ENCODE measurements at regions of chr11 and their contacts with region 1.

Region 1: DNA sequence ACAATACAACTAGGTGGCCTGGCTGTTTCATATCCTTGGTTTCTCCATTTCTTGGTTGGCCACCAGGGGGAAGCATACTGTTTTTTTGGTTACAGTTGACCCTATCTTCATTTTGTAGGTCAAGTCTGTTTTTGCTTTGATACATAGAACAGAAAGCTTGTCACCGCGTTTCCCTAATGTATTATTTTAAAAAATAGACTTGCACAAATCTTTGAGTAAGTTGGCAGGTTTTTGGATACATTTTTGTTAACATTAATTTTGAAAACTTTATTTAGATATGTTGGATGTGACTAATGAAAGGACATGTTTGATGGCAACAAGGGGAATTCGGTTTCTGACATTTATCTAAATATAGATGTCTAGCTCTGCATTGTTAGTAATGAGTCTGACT is 3.0 kb downstream of the NCR3LG1 start:
- DNase-seq: peak in 1 of 2 experiments; percentile 80
- H3K4me3 ChIP-seq: no peak overlapping the region
- H3K27ac ChIP-seq: no peak overlapping the region
- H3K4me1 ChIP-seq: peaks cover 0 to 8% (median 4%) of the 10 kb centered on the region in 4 experiments; a peak in 5 of 7 replicates
- H3K27me3 ChIP-seq: peaks cover 29 to 47% (median 40%) of the 10 kb centered on the region in 4 experiments
- CTCF ChIP-seq: peak in 2 of 3 experiments; percentile 54 to 59; a peak in 2 of 4 replicates
- EP300 ChIP-seq: no peak
- POLR2A ChIP-seq: no peak
- RAD21 ChIP-seq: peak; percentile 26 to 54; a peak in 3 of 4 replicates

Region 2: DNA sequence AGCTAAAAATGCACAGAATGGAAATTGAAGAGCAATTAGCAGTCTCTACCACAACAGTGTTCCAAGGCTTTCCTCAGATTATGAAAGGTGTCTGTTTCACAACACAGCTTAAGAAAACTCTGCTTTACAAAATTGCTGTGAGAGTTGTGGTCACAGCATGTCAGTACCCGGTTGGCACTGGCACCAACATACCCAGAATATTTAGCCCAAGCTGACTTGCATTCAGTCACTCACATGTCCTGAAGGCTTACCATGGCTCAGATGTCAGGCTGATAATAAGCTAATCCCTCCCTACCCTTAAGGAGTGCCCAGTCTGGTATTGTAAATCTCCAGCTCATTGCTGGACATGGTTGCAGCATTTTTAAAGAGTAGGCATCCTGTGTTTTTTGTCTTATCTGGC is 11.9 kb after region 1 on chr11:
- CTCF ChIA-PET with region 1: interaction called, 17 read pairs
- POLR2A ChIA-PET with region 1: no interaction called
- DNase-seq: no peak
- H3K4me3 ChIP-seq: no peak overlapping the region
- H3K27ac ChIP-seq: no peak overlapping the region
- H3K4me1 ChIP-seq: no peaks in the 10 kb centered on the region
- H3K27me3 ChIP-seq: no peaks in the 10 kb centered on the region; a peak in 1 of 7 replicates
- CTCF ChIP-seq: no peak
- EP300 ChIP-seq: no peak
- POLR2A ChIP-seq: no peak
- RAD21 ChIP-seq: no peak